Ascending aorta (tissue), 2 donors: ENCODE measurements at regions of chr13 and their contacts with region 1.

Region 1: DNA sequence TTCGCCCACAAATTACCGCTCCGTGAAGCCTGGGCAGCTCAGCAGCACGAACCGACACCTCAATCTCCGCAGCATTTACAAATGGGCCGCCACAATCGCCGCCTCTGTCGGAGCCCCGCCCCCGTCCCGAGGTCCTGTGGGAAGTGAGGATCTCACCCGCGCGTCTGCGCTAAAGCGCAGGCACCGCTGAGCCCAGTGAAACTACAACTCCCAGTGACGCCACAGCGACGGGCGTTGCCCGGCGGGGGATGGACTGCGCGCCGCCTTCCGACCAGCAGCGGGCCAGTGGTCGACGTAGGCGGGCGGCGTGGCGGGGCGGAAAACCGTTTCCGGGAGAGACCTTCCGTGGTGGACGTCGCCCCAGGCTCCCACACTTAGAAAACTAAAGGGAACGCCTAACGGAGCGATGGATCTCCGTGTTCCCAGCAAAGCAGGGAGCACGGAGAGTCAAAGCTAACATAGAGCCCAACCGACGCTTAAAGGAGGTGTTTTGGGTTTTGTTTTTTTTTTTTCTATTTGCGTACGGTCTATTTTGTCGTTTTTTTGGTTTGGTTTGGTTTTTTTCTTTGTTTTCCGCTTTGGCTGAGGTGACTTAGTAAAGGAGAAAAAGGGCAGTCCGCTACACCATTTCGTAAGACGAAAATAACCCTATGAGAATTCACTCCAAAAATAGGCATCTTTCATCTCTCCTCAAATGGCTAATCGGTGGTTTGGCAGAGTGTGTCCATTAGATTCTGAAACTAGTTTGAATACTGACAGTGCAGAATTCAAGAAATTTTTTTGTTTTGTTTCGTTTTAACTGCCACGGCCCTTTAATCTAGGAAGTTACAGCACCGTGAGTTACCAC is 159.0 kb downstream of the RNF17 start:
- DNase-seq: peak; percentile 90 to 99
- H3K4me3 ChIP-seq: peak overlapping the region; percentile 89 to 99
- H3K27ac ChIP-seq: peak overlapping the region; percentile 98 to 99
- H3K4me1 ChIP-seq: peaks cover 0 to 3% of the 10 kb centered on the region in 2 donors
- H3K27me3 ChIP-seq: no peaks in the 10 kb centered on the region
- CTCF ChIP-seq: no peak

Region 2: GRCh38 chr13:24985109-24985508 is 62.1 kb after region 1 on chr13:
- intact Hi-C with region 1: loop called (anchors 5 kb)
- DNase-seq: no peak
- H3K4me3 ChIP-seq: no peak overlapping the region
- H3K27ac ChIP-seq: no peak overlapping the region
- H3K4me1 ChIP-seq: no peaks in the 10 kb centered on the region
- H3K27me3 ChIP-seq: no peaks in the 10 kb centered on the region
- CTCF ChIP-seq: no peak

Region 3: DNA sequence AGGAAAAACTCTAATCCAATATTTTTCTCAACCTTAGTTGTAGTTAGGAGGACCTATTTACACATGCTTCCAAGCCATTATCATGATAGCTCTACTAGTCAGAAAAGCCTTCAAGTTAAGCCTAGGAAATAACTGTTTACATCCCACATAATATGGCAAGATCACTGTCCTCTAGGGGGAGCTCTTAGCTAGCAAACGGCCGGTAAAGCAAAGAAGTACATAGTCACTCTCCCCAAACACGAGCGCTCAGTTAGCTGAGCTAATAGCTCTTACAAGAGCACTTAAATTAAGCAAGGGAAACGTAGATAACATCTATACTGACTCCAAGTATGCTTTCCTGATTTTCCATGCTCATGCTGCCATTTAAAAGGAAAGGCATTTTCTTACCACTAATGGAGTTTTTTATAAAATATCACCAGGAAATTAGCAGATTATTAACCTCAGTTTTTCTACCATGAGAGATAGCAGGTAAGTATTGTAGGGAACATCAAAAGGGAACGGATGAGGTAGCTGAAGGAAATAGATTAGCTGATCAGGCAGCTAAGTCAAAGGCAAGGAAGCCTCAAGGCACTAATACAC is 72.3 kb after region 1 on chr13:
- intact Hi-C with region 1: loop called (anchors 2 kb)
- DNase-seq: peak in 1 of 2 donors; percentile 79
- H3K4me3 ChIP-seq: no peak overlapping the region
- H3K27ac ChIP-seq: no peak overlapping the region
- H3K4me1 ChIP-seq: no peaks in the 10 kb centered on the region
- H3K27me3 ChIP-seq: no peaks in the 10 kb centered on the region
- CTCF ChIP-seq: peak; percentile 26 to 72 (median 69)

Region 4: GRCh38 chr13:25203127-25203740 is 280.3 kb after region 1 on chr13:
- intact Hi-C with region 1: no loop called
- DNase-seq: peak in 1 of 2 donors; percentile 48
- H3K4me3 ChIP-seq: no peak overlapping the region
- H3K27ac ChIP-seq: no peak overlapping the region
- H3K4me1 ChIP-seq: no peaks in the 10 kb centered on the region
- H3K27me3 ChIP-seq: no peaks in the 10 kb centered on the region
- CTCF ChIP-seq: no peak

Region 5: GRCh38 chr13:25286969-25287961 is 364.3 kb after region 1 on chr13 and contains the start of gene MTMR6:
- intact Hi-C with region 1: loop called (anchors 2 kb)
- DNase-seq: peak; percentile 60 to 96
- H3K4me3 ChIP-seq: peak within 1 kb of the TSS; percentile 72 to 89
- H3K27ac ChIP-seq: peak within 1 kb of the TSS; percentile 84 to 94
- H3K4me1 ChIP-seq: peaks cover 3 to 22% of the 10 kb centered on the region in 2 donors
- H3K27me3 ChIP-seq: no peaks in the 10 kb centered on the region
- CTCF ChIP-seq: peak; percentile 98 to 100 (median 100)
- total RNA-seq, gene MTMR6: 6.4 TPM

Region 6: DNA sequence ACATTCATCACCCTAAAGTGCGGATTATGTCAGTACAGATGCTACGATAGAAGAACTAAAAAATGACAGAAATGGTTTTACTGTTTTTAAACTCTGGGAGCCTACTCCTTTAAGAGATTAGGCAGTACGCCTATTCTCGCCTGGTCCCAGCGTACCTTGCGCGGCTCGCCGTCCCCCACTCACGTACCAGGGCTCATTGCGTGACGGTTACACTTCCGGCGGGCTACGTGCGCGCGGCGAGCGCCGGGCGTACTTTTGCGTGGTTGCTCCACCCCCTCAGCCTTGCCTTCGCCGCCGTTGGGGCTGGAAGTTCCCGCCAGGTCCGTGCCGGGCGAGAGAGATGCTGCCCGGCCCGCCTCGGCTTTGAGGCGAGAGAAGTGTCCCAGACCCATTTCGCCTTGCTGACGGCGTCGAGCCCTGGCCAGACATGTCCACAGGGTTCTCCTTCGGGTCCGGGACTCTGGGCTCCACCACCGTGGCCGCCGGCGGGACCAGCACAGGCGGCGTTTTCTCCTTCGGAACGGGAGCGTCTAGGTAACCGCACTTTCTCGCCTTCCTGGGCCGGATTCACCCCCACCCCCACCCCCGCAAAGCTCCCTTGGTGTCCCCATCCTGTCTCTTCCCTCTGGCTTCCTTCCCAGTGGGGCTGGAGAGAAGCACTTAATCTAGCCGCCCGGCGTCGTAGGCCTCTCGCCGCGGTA is 378.5 kb after region 1 on chr13 and contains the start of gene NUP58:
- intact Hi-C with region 1: loop called (anchors 5 kb)
- DNase-seq: peak; percentile 84 to 97
- H3K4me3 ChIP-seq: peak within 1 kb of the TSS; percentile 94
- H3K27ac ChIP-seq: peak within 1 kb of the TSS; percentile 91 to 96
- H3K4me1 ChIP-seq: peaks cover 0 to 11% of the 10 kb centered on the region in 2 donors
- H3K27me3 ChIP-seq: no peaks in the 10 kb centered on the region
- CTCF ChIP-seq: no peak
- total RNA-seq, gene NUP58: 9.7 TPM

Region 7: DNA sequence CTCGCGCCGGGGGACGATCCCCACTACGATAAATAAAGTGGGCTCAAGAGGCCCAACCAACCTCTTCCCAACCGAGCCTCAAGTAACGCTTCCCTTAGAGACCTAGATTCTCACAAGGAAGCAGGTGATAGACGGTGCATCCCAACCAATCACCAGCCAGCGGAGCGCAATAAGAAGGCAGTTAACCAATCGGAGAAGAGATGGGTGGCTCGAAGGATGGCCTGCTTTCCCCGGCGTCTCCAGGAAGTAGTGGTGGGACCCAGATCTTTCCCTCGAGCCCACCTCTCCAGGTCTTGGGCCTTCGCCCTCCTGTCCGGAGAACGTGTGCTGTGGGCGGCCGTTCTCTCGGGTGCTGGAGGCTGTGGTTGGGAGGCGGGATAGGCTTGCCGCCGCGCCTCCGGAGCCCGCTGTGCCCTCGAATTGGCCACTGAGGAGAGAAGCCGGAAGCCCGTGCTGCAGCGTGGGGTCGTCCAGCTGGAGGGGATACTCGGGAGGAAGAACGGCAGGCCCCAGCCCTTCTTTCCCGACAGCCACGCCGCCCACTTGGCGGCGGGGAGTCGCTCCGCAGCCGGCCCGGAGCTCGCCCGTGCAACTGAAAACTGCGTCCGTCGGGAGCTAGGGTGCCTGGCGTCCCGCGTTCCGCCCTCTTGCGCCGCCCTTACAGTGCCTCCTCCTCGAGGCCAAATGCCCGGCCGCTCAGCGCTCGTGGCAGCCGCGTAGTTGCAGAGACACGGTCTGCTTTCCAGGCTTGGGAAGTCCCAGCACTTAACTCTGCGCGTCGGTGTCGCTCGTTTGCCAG is 1299.0 kb after region 1 on chr13 and contains the start of gene RNF6:
- intact Hi-C with region 1: loop called (anchors 10 kb)
- DNase-seq: peak; percentile 91 to 98
- H3K4me3 ChIP-seq: peak within 1 kb of the TSS; percentile 75 to 76
- H3K27ac ChIP-seq: peak within 1 kb of the TSS; percentile 91 to 97
- H3K4me1 ChIP-seq: peaks cover 0 to 12% of the 10 kb centered on the region in 2 donors
- H3K27me3 ChIP-seq: no peaks in the 10 kb centered on the region
- CTCF ChIP-seq: no peak
- total RNA-seq, gene RNF6: 15.8 TPM